GM12878 (cell line): ENCODE measurements at regions of chr7 and their contacts with region 1.

Region 1: DNA sequence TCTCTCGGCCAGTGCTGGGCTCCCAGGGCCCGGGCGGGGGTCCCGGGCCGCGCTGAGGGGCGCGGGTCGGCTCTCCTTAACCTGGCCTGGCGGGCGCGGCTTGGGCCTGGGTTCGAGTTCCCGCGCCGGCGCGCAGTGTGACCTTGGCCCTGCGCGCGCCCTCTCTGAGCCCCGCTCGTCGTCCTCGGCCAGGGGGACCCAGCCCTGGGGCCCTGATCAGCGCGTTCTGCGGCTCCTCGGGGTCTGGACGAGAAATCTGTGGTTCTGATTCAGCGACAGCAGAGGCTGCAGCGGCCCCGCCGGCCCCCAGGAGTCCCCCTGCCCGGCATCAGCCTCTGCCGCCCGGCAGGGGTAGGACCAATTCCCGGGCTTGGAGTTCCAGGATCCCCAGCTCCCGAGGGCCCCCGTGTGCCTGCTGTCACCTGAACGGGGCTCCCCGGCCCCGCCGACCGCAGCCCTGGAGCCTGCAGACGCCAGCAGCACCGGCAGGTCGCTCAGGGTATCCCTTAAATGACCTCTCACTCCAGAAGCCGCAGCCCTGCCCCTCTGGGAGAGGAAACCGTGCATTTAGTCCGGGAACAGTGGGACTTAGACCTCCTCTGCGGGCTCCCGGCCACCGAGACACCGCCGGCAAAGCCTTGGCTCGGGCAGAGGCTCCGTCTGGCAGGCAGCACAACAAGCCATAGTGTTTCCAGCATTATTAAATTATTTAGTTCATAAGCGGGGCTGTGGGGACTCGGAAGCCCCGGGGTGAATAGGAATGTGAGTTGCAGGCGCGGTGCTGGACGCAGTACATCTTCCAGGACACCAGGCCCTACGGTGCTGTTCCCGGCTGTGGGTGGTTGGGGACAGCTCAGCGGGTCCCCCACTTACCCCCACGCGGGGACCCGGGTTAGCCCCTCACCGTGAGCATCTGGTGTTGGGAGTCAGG is 572 bp downstream of the CHST12 start:
- DNase-seq: no peak
- ATAC-seq: peak; percentile 7
- H3K4me3 ChIP-seq: peak overlapping the region; percentile 70
- H3K27ac ChIP-seq: peak overlapping the region; percentile 84
- H3K4me1 ChIP-seq: peaks cover 42% of the 10 kb centered on the region
- H3K27me3 ChIP-seq: no peaks in the 10 kb centered on the region
- CTCF ChIP-seq: 0 out of 6 replicates have a peak, but pooled peaks of 1 of the 3 experiments have one; percentile 8
- EP300 ChIP-seq: no peak
- POLR2A ChIP-seq: no peak; the same call in 1 of the 2 replicates
- RAD21 ChIP-seq: no peak

Region 2: GRCh38 chr7:2471396-2471795 is 67.4 kb after region 1 on chr7:
- CTCF ChIA-PET with region 1: interaction called, 20 read pairs
- POLR2A ChIA-PET with region 1: no interaction called
- RAD21 ChIA-PET with region 1: interaction called, 4 read pairs
- SMC1A ChIA-PET with region 1: interaction called, 6 read pairs
- in situ Hi-C with region 1: no loop called
- intact Hi-C with region 1: no loop called
- DNase-seq: no peak
- ATAC-seq: no peak; the same call in 2 of the 3 replicates
- H3K4me3 ChIP-seq: no peak overlapping the region
- H3K27ac ChIP-seq: no peak overlapping the region
- H3K4me1 ChIP-seq: no peaks in the 10 kb centered on the region
- H3K27me3 ChIP-seq: no peaks in the 10 kb centered on the region
- CTCF ChIP-seq: no peak
- EP300 ChIP-seq: no peak
- POLR2A ChIP-seq: no peak
- RAD21 ChIP-seq: no peak

Region 3: DNA sequence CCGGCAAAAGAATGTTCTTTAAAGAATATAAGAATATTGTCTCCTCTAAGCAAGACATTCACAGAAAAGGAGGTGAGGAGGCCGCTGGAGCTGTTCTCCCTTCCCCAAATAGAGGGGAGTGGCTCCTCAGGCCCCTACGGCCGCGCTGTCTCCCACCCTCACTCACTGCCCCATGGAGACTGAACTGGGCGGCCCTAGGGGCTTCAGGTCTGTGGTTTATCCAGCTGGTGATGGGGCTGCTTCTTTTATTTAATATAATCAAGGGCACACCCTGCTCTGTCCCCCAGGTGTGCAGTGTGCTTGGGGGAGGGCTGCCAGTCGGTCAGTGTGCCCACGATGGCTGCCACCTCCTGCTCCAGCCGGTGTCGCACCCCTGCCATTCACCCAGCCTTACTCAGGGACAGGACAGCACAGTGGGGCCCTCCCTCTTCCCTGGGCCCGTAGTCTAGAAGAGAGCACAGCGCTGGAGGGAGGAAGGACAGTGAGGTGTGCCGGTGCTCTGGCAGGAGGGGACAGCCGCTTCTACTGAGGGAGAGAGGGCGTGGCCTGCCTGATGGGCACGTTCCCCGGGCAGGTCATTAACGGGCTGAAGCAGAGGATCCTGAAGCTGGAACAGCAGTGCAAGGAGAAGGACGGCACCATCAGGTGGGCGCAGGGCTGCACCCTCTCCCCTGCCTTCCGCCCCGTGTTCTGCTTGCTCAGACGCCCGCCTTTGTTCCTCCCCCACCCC is 178.2 kb after region 1 on chr7:
- CTCF ChIA-PET with region 1: no interaction called
- POLR2A ChIA-PET with region 1: no interaction called
- RAD21 ChIA-PET with region 1: no interaction called
- SMC1A ChIA-PET with region 1: no interaction called
- in situ Hi-C with region 1: no loop called
- intact Hi-C with region 1: no loop called
- DNase-seq: no peak
- ATAC-seq: no peak
- H3K4me3 ChIP-seq: no peak overlapping the region
- H3K27ac ChIP-seq: no peak overlapping the region
- H3K4me1 ChIP-seq: no peaks in the 10 kb centered on the region
- H3K27me3 ChIP-seq: no peaks in the 10 kb centered on the region
- CTCF ChIP-seq: no peak
- EP300 ChIP-seq: no peak
- POLR2A ChIP-seq: no peak
- RAD21 ChIP-seq: no peak

Region 4: DNA sequence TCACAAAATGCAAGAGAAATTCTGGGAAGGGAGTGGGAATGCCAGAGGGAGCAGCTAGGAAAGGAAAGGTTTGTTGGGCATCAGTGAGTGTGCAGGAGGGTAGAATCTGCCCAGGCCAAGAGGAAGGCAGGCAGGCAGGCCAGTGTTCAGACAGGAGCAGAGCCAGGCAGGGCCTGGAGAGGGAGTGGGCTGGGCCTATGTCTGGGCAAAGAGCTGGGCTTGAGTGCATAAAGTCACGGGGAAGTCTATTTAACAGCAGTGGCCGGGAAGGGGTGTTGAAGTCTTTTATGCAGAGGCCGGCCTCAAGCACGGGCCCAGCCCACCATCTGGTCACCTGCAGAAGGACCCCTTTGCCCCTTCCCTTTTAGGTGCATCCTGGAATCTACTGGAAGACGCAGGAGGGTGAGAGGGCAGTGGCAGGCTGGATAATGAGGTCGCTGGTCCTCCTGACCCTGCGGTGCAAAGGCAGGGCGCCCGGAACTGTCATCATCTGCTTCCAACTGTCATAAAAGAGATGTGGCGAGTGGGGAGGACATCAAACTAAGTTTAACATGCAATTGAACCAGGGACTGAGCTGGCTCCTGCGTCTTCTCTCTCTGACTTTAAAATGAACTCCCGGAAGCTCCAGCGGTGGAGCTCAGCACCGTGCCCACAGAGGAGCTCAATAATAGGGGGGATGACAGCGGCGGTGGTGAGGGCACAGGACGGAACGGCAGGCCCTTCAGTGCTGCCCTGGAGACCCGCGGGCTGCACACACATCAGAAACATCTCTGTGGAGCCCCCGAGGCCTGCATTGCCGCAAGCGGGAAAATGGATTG is 610.2 kb after region 1 on chr7:
- CTCF ChIA-PET with region 1: no interaction called
- POLR2A ChIA-PET with region 1: no interaction called
- RAD21 ChIA-PET with region 1: no interaction called
- SMC1A ChIA-PET with region 1: no interaction called
- in situ Hi-C with region 1: no loop called
- intact Hi-C with region 1: no loop called
- DNase-seq: no peak
- ATAC-seq: no peak
- H3K4me3 ChIP-seq: no peak overlapping the region
- H3K27ac ChIP-seq: no peak overlapping the region
- H3K4me1 ChIP-seq: peaks cover 4% of the 10 kb centered on the region; the same call in 1 of the 2 replicates
- H3K27me3 ChIP-seq: no peaks in the 10 kb centered on the region
- CTCF ChIP-seq: no peak
- EP300 ChIP-seq: no peak
- POLR2A ChIP-seq: no peak
- RAD21 ChIP-seq: no peak